Aorta (tissue), 5 donors: ENCODE measurements at regions of chr11 and their contacts with region 1.

Region 1: GRCh38 chr11:62601394-62602140 is at the start of gene MTA2:
- DNase-seq: peak; percentile 98 to 99
- ATAC-seq: peak; percentile 95
- H3K4me3 ChIP-seq: peak within 1 kb of the TSS; percentile 72 to 73
- H3K27ac ChIP-seq: peak within 1 kb of the TSS; percentile 20 to 82
- H3K4me1 ChIP-seq: no peaks in the 10 kb centered on the region
- H3K27me3 ChIP-seq: no peaks in the 10 kb centered on the region
- total RNA-seq, gene MTA2: 80.1 to 87.9 TPM

Region 2: GRCh38 chr11:62665075-62665598 is 63.6 kb after region 1 on chr11 and contains the starts of genes C11orf98 and CSKMT:
- intact Hi-C with region 1: loop called in 1 of 2 experiments (anchors 5 kb)
- DNase-seq: peak; percentile 97
- ATAC-seq: peak; percentile 97
- H3K4me3 ChIP-seq: peak within 1 kb of the TSS; percentile 56 to 62
- H3K27ac ChIP-seq: peak within 1 kb of the TSS; percentile 4 to 87
- H3K4me1 ChIP-seq: peaks cover 2 to 8% of the 10 kb centered on the region in 2 donors
- H3K27me3 ChIP-seq: no peaks in the 10 kb centered on the region
- total RNA-seq, gene C11orf98: 23.1 to 27.7 TPM
- total RNA-seq, gene CSKMT: 11.1 to 11.7 TPM